ENCODE measurements at regions of chr4 and their contacts with region 1.

Region 1: DNA sequence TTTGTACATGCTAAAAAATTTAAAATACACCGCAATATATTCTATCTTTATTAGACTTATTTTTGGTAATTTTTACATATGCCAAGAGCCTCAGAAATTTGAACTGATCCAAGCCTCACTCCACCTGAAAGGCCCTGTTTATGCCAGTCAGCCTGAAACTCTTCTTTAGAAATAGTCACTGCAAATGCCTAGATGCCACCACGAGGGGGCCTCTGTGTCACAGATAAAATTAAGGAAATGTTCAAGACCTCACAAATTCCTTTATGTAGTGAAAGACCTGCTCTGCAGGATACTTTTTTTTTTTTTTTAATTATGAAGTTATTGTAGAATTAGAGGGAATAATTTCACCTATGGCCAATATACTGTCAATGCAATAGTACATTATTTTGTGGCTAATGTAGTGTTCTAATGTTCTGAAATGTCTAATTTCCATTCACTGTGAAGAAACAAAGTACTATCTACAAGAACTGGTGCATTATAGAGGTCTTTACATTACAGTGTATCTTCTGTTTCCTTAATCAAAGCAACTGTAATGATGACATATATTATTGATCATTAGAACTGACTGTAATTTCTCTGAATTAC is 69.8 kb downstream of the DTHD1 start:
- DNase-seq: peak; percentile 77
- ATAC-seq: peak; percentile 53
- H3K4me3 ChIP-seq: no peak overlapping the region
- H3K4me3 Mint-ChIP-seq: no peak overlapping the region
- H3K27ac ChIP-seq: no peak overlapping the region
- H3K27ac Mint-ChIP-seq: no peak overlapping the region
- H3K4me1 ChIP-seq: peaks cover 15 to 19% of the 10 kb centered on the region in 2 donors
- H3K4me1 Mint-ChIP-seq: peaks cover 21% of the 10 kb centered on the region
- H3K27me3 ChIP-seq: no peaks in the 10 kb centered on the region
- H3K27me3 Mint-ChIP-seq: peaks cover 3% of the 10 kb centered on the region
- CTCF ChIP-seq: peak; percentile 91

Region 2: GRCh38 chr4:36285784-36286480 is 65.2 kb before region 1 on chr4:
- CTCF ChIA-PET with region 1: no interaction called
- POLR2A ChIA-PET with region 1: no interaction called
- intact Hi-C with region 1: no loop called
- DNase-seq: peak; percentile 43
- ATAC-seq: peak; percentile 96
- H3K4me3 ChIP-seq: peak overlapping the region in 1 of 5 experiments; percentile 1
- H3K4me3 Mint-ChIP-seq: peak overlapping the region; percentile 38
- H3K27ac ChIP-seq: no peak overlapping the region
- H3K27ac Mint-ChIP-seq: peak overlapping the region; percentile 43
- H3K4me1 ChIP-seq: peaks cover 4 to 9% of the 10 kb centered on the region in 2 donors
- H3K4me1 Mint-ChIP-seq: peaks cover 17% of the 10 kb centered on the region
- H3K27me3 ChIP-seq: peaks cover 0 to 4% (median 0%) of the 10 kb centered on the region in 4 experiments
- H3K27me3 Mint-ChIP-seq: no peaks in the 10 kb centered on the region
- CTCF ChIP-seq: no peak

Region 3: DNA sequence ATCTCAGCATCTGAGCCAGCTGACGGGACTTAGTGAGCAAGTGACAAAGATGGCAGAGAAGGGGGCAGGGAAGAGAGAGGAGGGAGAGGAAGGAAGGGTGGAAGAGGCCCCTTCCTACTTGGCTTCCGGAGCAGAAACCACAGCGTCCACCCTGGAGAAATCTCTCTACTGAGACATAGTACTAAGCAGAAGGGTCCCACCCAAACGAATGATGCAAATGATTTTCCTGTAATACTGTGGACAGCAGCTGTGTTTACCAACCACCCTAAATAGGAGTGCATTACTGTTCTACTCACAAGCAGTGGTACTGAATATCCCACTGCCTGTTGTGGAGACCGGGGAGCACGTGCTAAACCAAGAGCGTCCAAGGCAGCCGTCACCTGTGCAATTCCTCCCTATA is 40.4 kb before region 1 on chr4:
- CTCF ChIA-PET with region 1: interaction called, 4 read pairs
- POLR2A ChIA-PET with region 1: no interaction called
- intact Hi-C with region 1: loop called (anchors 5 kb)
- DNase-seq: peak; percentile 57
- ATAC-seq: peak; percentile 82
- H3K4me3 ChIP-seq: peak overlapping the region in 3 of 5 experiments; percentile 11 to 40 (median 21)
- H3K4me3 Mint-ChIP-seq: peak overlapping the region; percentile 55
- H3K27ac ChIP-seq: peak overlapping the region; percentile 5 to 31
- H3K27ac Mint-ChIP-seq: peak overlapping the region; percentile 76
- H3K4me1 ChIP-seq: peaks cover 27 to 50% of the 10 kb centered on the region in 2 donors
- H3K4me1 Mint-ChIP-seq: peaks cover 68% of the 10 kb centered on the region
- H3K27me3 ChIP-seq: no peaks in the 10 kb centered on the region
- H3K27me3 Mint-ChIP-seq: no peaks in the 10 kb centered on the region
- CTCF ChIP-seq: no peak

Region 4: DNA sequence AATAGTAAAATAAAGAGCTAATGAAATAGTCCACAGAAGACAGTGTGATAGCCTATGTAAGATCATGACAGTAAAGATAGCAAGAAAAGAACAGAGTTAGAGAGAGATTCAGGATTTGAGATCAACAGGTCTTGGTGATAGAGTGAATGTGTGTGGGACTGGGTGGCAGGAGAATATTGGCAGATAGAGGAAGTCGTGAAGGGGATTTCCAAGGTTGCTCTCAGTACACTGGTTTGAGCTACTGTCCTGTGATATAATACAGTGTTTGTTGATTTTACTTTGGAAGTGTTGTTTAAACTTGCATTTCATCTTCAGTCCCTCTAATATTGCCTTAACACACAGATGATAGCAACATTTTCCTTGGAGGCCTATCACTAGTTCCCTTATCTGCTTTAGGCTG is 25.7 kb before region 1 on chr4:
- CTCF ChIA-PET with region 1: interaction called, 10 read pairs
- POLR2A ChIA-PET with region 1: no interaction called
- intact Hi-C with region 1: no loop called
- DNase-seq: peak; percentile 81
- ATAC-seq: peak; percentile 89
- H3K4me3 ChIP-seq: peak overlapping the region in 2 of 5 experiments; percentile 7 to 44
- H3K4me3 Mint-ChIP-seq: peak overlapping the region; percentile 69
- H3K27ac ChIP-seq: peak overlapping the region; percentile 76 to 85
- H3K27ac Mint-ChIP-seq: peak overlapping the region; percentile 90
- H3K4me1 ChIP-seq: peaks cover 44 to 49% of the 10 kb centered on the region in 2 donors
- H3K4me1 Mint-ChIP-seq: peaks cover 68% of the 10 kb centered on the region
- H3K27me3 ChIP-seq: no peaks in the 10 kb centered on the region
- H3K27me3 Mint-ChIP-seq: no peaks in the 10 kb centered on the region
- CTCF ChIP-seq: no peak

Region 5: GRCh38 chr4:36332023-36332781 is 19.0 kb before region 1 on chr4:
- CTCF ChIA-PET with region 1: interaction called, 4 read pairs
- POLR2A ChIA-PET with region 1: no interaction called
- intact Hi-C with region 1: loop called (anchors 2 kb)
- DNase-seq: no peak
- ATAC-seq: peak; percentile 17
- H3K4me3 ChIP-seq: peak overlapping the region in 1 of 5 experiments; percentile 6
- H3K4me3 Mint-ChIP-seq: no peak overlapping the region
- H3K27ac ChIP-seq: peak overlapping the region in 1 of 2 donors; percentile 3
- H3K27ac Mint-ChIP-seq: peak overlapping the region; percentile 34
- H3K4me1 ChIP-seq: peaks cover 7 to 14% of the 10 kb centered on the region in 2 donors
- H3K4me1 Mint-ChIP-seq: peaks cover 30% of the 10 kb centered on the region
- H3K27me3 ChIP-seq: no peaks in the 10 kb centered on the region
- H3K27me3 Mint-ChIP-seq: no peaks in the 10 kb centered on the region
- CTCF ChIP-seq: no peak

Region 6: GRCh38 chr4:37561803-37562207 is 1210.6 kb after region 1 on chr4:
- CTCF ChIA-PET with region 1: no interaction called
- POLR2A ChIA-PET with region 1: no interaction called
- intact Hi-C with region 1: loop called (anchors 10 kb)
- DNase-seq: no peak
- ATAC-seq: no peak
- H3K4me3 ChIP-seq: no peak overlapping the region
- H3K4me3 Mint-ChIP-seq: no peak overlapping the region
- H3K27ac ChIP-seq: no peak overlapping the region
- H3K27ac Mint-ChIP-seq: no peak overlapping the region
- H3K4me1 ChIP-seq: no peaks in the 10 kb centered on the region
- H3K4me1 Mint-ChIP-seq: no peaks in the 10 kb centered on the region
- H3K27me3 ChIP-seq: peaks cover 0 to 3% (median 0%) of the 10 kb centered on the region in 4 experiments
- H3K27me3 Mint-ChIP-seq: peaks cover 10% of the 10 kb centered on the region
- CTCF ChIP-seq: no peak

Measured in B cell (primary cell).